ENCODE measurements at regions of chr2 and their contacts with region 1.

Region 1: GRCh38 chr2:172102391-172103278 is at the start of gene DLX2:
- DNase-seq: peak; percentile 92
- H3K4me3 ChIP-seq: peak within 1 kb of the TSS; percentile 50 to 63 (median 54)
- H3K27ac ChIP-seq: no peak within 1 kb of the TSS
- H3K4me1 ChIP-seq: peaks cover 55 to 68% (median 67%) of the 10 kb centered on the region in 4 donors
- H3K27me3 ChIP-seq: peaks cover 51 to 100% (median 96%) of the 10 kb centered on the region in 4 donors
- CTCF ChIP-seq: no peak
- EP300 ChIP-seq: no peak
- POLR2A ChIP-seq: no peak
- total RNA-seq, gene DLX2: not detected

Region 2: GRCh38 chr2:170514140-170514539 is 1588.5 kb before region 1 on chr2:
- intact Hi-C with region 1: no loop called
- DNase-seq: no peak
- H3K4me3 ChIP-seq: no peak overlapping the region
- H3K27ac ChIP-seq: no peak overlapping the region
- H3K4me1 ChIP-seq: peaks cover 0 to 3% (median 0%) of the 10 kb centered on the region in 4 donors
- H3K27me3 ChIP-seq: no peaks in the 10 kb centered on the region
- CTCF ChIP-seq: no peak
- EP300 ChIP-seq: no peak
- POLR2A ChIP-seq: no peak

Region 3: DNA sequence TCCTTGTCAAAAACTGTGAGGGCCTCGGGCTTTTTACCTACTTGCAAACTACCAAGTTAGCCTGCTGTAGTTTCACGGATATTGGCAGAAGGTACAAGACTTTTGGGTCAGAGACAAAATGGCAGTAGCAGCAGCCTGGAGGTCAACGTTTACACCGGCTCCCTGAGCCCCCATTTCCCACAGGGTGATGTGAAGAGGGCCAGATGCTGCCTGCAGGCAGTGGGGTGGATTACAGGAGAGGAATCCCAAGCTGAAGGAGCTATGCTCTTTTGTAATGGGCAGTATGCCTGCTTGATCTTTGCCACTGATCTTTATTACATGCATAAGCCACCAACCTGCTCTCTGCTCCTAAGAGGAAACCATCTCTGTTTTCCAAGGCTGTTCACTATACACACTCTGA is 1417.0 kb before region 1 on chr2:
- intact Hi-C with region 1: no loop called
- DNase-seq: no peak
- H3K4me3 ChIP-seq: no peak overlapping the region
- H3K27ac ChIP-seq: no peak overlapping the region
- H3K4me1 ChIP-seq: no peaks in the 10 kb centered on the region
- H3K27me3 ChIP-seq: no peaks in the 10 kb centered on the region
- CTCF ChIP-seq: no peak
- EP300 ChIP-seq: no peak
- POLR2A ChIP-seq: no peak

Region 4: GRCh38 chr2:171598713-171599319 is 503.8 kb before region 1 on chr2:
- intact Hi-C with region 1: loop called (anchors 10 kb)
- DNase-seq: peak; percentile 34
- H3K4me3 ChIP-seq: no peak overlapping the region
- H3K27ac ChIP-seq: no peak overlapping the region
- H3K4me1 ChIP-seq: no peaks in the 10 kb centered on the region
- H3K27me3 ChIP-seq: peaks cover 0 to 5% (median 0%) of the 10 kb centered on the region in 4 donors
- CTCF ChIP-seq: peak; percentile 63 to 76 (median 64)
- EP300 ChIP-seq: no peak
- POLR2A ChIP-seq: no peak

Region 5: DNA sequence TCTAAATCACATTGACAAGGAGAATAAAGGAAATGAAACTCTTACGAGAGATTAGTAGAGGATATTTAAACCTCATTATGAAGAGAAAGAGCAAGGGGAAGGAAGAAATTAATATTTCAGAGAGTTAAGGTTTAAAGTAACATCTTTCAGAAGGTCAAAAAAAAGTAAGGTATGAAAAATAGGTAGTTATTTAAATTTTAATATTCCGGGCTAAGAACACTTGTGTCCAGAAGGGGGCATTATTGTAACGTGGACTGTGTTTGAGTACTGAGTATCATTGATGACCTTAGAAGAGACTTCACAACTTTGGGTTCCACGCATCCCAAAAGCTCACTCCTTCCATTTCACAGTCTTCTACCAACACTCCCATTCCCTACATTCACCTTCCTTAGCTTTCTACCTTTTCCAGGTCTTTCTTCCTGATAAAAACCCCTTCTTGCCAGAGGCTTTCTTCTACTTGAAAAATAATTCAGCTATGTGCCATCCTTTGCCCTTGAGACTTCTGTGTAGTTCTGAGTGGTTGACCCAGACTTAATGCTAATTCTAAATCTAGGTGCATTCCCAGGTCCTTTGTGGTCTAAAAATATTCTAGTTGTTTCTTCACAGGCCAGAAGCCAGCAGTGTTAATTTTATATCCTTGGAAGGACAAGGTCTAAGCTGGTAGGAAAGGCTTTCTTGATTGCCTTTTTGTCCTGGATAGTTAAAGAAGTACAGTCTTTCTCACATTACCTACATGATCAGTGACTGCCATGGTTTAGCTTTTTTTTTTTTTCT is 398.9 kb before region 1 on chr2:
- intact Hi-C with region 1: loop called (anchors 10 kb)
- DNase-seq: no peak
- H3K4me3 ChIP-seq: no peak overlapping the region
- H3K27ac ChIP-seq: peak overlapping the region in 2 of 4 donors; percentile 32 to 51
- H3K4me1 ChIP-seq: peaks cover 12 to 50% (median 34%) of the 10 kb centered on the region in 4 donors
- H3K27me3 ChIP-seq: no peaks in the 10 kb centered on the region
- CTCF ChIP-seq: peak in 2 of 3 experiments; percentile 16 to 44
- EP300 ChIP-seq: no peak
- POLR2A ChIP-seq: no peak

Region 6: DNA sequence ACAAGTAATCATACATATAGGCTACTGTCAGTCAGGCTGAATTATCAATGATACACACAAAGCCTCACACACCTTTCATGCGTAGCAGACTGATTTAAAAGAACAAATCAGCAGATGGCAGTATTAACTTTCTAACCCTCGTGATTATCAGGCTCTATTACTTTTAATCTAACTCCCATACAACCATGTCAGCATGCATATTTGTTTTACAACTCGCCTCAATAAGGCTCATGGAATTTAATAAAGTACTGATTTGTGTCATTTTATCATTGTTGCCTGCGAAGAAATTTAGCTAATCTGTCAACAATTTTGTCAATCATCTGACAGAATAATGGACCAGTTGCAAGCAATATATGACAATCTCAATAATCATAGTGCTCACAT is 291.4 kb before region 1 on chr2:
- intact Hi-C with region 1: loop called (anchors 5 kb)
- DNase-seq: no peak
- H3K4me3 ChIP-seq: no peak overlapping the region
- H3K27ac ChIP-seq: no peak overlapping the region
- H3K4me1 ChIP-seq: peaks cover 0 to 24% (median 17%) of the 10 kb centered on the region in 4 donors
- H3K27me3 ChIP-seq: no peaks in the 10 kb centered on the region
- CTCF ChIP-seq: peak in 2 of 3 experiments; percentile 39 to 44
- EP300 ChIP-seq: no peak
- POLR2A ChIP-seq: no peak